ENCODE measurements at regions of chr9 and their contacts with region 1.

Region 1: DNA sequence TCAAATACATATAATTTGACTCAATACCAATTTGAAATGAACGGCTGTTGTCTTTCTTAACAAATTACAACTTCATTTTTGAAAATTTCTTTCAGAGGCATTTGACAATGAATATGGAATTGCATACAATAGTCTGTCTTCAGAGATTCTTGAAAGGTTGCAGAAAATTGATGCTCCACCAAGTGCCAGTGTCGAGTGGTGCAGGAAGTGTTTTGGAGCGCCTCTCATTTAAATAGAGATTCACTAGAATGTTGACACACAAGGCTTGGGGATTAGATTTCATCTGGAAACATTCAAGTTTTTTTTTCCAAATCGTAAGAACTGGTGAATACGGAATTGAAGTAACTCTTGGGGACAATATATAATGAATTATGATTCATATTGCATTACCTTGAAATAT is 8.1 kb downstream of the RPS6 start:
- DNase-seq: peak; percentile 39
- H3K4me3 ChIP-seq: no peak overlapping the region
- H3K27ac ChIP-seq: peak overlapping the region; percentile 5
- H3K4me1 ChIP-seq: peaks cover 15% of the 10 kb centered on the region
- CTCF ChIP-seq: peak; percentile 59

Region 2: GRCh38 chr9:19230356-19231125 is 141.4 kb before region 1 on chr9 and contains the start of gene DENND4C:
- CTCF ChIA-PET with region 1: no interaction called
- POLR2A ChIA-PET with region 1: interaction called, 4 read pairs
- intact Hi-C with region 1: loop called (anchors 2 kb)
- DNase-seq: peak; percentile 88
- H3K4me3 ChIP-seq: peak within 1 kb of the TSS; percentile 81
- H3K27ac ChIP-seq: peak within 1 kb of the TSS; percentile 45
- H3K4me1 ChIP-seq: peaks cover 29% of the 10 kb centered on the region
- CTCF ChIP-seq: peak; percentile 32; the same call in 1 of the 2 replicates
- total RNA-seq, gene DENND4C: 24.2 and 28.6 TPM in 2 replicates